Body of pancreas (tissue), 4 donors: ENCODE measurements at regions of chr16 and their contacts with region 1.

Region 1: DNA sequence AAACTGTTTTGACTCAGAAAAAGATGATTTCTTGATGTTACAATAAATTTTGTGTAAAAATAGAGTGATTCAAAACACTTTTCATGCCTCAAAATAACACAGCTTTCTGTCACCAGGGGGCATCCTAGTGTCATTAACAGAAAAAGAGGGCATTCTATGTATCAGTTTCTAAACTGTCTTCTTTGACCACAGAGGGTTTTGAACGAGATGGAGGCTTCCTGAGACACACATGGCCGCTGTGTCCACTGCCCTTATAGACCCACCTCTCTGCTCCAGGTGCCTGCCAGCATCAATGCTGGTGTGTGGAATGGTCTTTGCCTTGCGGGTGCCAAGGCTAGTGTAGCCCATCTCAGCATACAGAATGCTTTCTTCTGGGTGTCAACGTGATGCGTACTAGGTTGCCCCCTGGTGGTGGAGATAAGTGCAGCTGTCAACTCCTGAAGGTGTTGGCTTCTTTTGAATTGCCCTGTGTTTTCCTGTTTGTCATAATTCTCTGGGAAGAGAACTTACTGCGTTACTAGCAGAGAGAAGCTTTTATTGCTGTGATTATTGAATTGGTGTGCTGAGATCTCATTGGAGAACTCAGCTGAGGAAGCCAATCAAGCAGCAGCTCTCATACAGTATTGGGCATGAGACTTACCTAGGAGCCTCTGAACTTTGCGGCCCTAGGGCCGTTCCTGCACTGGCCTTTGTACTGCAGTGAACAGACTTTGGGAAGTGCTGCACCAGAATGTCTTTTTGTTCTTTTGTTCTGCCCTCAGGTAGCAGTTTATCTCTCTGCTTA is 38.6 kb downstream of the USP10 start:
- DNase-seq: peak; percentile 77 to 85 (median 80)
- ATAC-seq: peak; percentile 71
- H3K4me3 ChIP-seq: no peak overlapping the region
- H3K27ac ChIP-seq: no peak overlapping the region
- H3K4me1 ChIP-seq: peaks cover 43% of the 10 kb centered on the region
- H3K27me3 ChIP-seq: no peaks in the 10 kb centered on the region
- CTCF ChIP-seq: peak; percentile 71 to 84 (median 78)
- POLR2A ChIP-seq: no peak

Region 2: DNA sequence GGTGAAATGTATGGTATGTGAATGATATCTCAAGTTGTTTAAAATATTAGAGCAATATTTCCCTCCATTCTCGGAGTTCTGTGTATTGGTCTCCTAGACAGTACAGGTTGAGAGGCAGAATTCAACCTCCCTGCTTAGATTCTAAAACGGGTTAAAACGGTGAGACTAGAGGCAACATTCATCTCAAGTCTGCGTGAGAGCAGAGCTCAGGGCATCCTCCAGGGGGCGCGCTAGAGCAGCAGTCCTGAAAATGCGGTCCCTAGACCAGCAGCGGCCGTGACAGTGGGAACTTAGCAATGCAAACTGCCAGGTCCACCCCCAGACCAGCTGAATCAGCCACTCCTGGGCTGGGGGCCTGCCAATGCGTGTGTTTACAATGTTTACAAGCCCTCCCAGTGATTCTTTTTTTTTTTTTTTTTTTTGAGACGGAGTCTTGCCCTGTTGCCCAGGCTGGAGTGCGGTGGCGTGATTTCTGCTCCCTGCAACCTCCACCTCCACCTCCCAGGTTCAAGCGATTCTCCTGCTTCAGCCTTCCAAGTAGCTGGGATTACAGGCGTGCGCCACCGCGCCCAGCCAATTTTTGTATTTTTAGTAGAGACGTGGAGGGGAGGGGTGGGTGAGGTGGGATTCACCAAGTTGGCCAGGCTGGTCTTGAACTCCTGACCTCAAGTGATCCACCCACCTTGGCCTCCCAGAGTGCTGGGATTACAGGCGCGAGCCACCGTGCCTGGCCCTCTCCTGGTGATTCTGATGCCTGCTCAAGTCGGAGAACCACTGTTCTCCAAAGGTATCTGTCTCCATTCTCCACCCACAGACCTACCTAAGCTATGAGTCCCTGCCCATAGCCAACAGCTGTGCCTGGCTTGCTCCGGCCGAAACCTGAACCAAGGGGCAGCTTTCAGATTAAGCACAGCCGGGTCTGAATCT is 65.9 kb before region 1 on chr16:
- intact Hi-C with region 1: loop called (anchors 5 kb)
- DNase-seq: peak; percentile 74 to 84 (median 78)
- ATAC-seq: peak; percentile 86
- H3K4me3 ChIP-seq: no peak overlapping the region
- H3K27ac ChIP-seq: no peak overlapping the region
- H3K4me1 ChIP-seq: peaks cover 5% of the 10 kb centered on the region
- H3K27me3 ChIP-seq: no peaks in the 10 kb centered on the region
- CTCF ChIP-seq: peak; percentile 80 to 93 (median 87)
- POLR2A ChIP-seq: no peak

Region 3: GRCh38 chr16:84841770-84842300 is 103.4 kb after region 1 on chr16:
- intact Hi-C with region 1: no loop called
- DNase-seq: peak; percentile 69 to 73 (median 72)
- ATAC-seq: peak; percentile 86
- H3K4me3 ChIP-seq: no peak overlapping the region
- H3K27ac ChIP-seq: peak overlapping the region in 3 of 4 donors; percentile 50 to 68 (median 67)
- H3K4me1 ChIP-seq: peaks cover 4% of the 10 kb centered on the region
- H3K27me3 ChIP-seq: no peaks in the 10 kb centered on the region
- CTCF ChIP-seq: no peak
- POLR2A ChIP-seq: peak in 2 of 3 donors; percentile 53 to 75

Region 4: GRCh38 chr16:84854759-84855158 is 116.3 kb after region 1 on chr16:
- intact Hi-C with region 1: no loop called
- DNase-seq: no peak
- ATAC-seq: peak; percentile 5
- H3K4me3 ChIP-seq: no peak overlapping the region
- H3K27ac ChIP-seq: no peak overlapping the region
- H3K4me1 ChIP-seq: no peaks in the 10 kb centered on the region
- H3K27me3 ChIP-seq: no peaks in the 10 kb centered on the region
- CTCF ChIP-seq: no peak
- POLR2A ChIP-seq: no peak